ENCODE measurements at regions of chr16 and their contacts with region 1.

Region 1: GRCh38 chr16:81204798-81205680 is 33.5 kb upstream of the BCO1 start:
- DNase-seq: peak; percentile 75
- ATAC-seq: no peak
- H3K4me3 Mint-ChIP-seq: no peak overlapping the region
- H3K27ac Mint-ChIP-seq: no peak overlapping the region
- H3K4me1 Mint-ChIP-seq: no peaks in the 10 kb centered on the region
- H3K27me3 Mint-ChIP-seq: peaks cover 7% of the 10 kb centered on the region

Region 2: GRCh38 chr16:81189100-81189664 is 15.9 kb before region 1 on chr16:
- CTCF ChIA-PET with region 1: interaction called, 13 read pairs
- POLR2A ChIA-PET with region 1: no interaction called
- intact Hi-C with region 1: no loop called
- DNase-seq: no peak
- ATAC-seq: no peak
- H3K4me3 Mint-ChIP-seq: no peak overlapping the region
- H3K27ac Mint-ChIP-seq: no peak overlapping the region
- H3K4me1 Mint-ChIP-seq: peaks cover 3% of the 10 kb centered on the region
- H3K27me3 Mint-ChIP-seq: peaks cover 6% of the 10 kb centered on the region

Region 3: DNA sequence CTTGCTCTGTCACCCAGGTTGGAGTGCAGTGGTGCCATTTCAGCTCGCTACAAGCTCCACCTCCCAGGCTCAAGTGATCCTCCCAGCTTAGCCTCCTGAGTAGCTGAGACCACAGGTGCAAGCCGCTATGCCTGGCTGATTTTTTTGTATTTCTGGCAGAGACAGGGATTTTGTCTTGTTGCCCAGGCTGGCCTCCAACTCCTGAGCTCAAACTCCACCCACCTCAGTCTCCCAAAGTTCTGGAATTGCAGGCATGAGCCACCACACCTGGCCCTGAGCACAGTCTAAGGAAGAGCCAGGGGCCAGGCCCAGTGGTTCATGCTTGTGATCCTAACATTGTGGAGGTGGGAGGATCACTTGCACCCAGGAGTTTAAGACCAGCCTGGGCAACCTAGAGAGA is 11.7 kb after region 1 on chr16:
- CTCF ChIA-PET with region 1: interaction called, 18 read pairs
- POLR2A ChIA-PET with region 1: interaction called, 4 read pairs
- intact Hi-C with region 1: no loop called
- DNase-seq: no peak
- ATAC-seq: no peak
- H3K4me3 Mint-ChIP-seq: no peak overlapping the region
- H3K27ac Mint-ChIP-seq: no peak overlapping the region
- H3K4me1 Mint-ChIP-seq: no peaks in the 10 kb centered on the region
- H3K27me3 Mint-ChIP-seq: peaks cover 3% of the 10 kb centered on the region

Region 4: GRCh38 chr16:81349996-81350618 is 145.1 kb after region 1 on chr16:
- CTCF ChIA-PET with region 1: interaction called, 5 read pairs
- POLR2A ChIA-PET with region 1: no interaction called
- intact Hi-C with region 1: loop called in 1 of 2 experiments (anchors 5 kb)
- DNase-seq: no peak
- ATAC-seq: peak; percentile 25
- H3K4me3 Mint-ChIP-seq: no peak overlapping the region
- H3K27ac Mint-ChIP-seq: no peak overlapping the region
- H3K4me1 Mint-ChIP-seq: peaks cover 15% of the 10 kb centered on the region
- H3K27me3 Mint-ChIP-seq: no peaks in the 10 kb centered on the region

Region 5: GRCh38 chr16:81737885-81738786 is 533.1 kb after region 1 on chr16:
- CTCF ChIA-PET with region 1: interaction called, 7 read pairs
- POLR2A ChIA-PET with region 1: no interaction called
- intact Hi-C with region 1: loop called (anchors 1 kb)
- DNase-seq: peak; percentile 93
- ATAC-seq: peak; percentile 98
- H3K4me3 Mint-ChIP-seq: peak overlapping the region; percentile 55
- H3K27ac Mint-ChIP-seq: peak overlapping the region; percentile 51
- H3K4me1 Mint-ChIP-seq: no peaks in the 10 kb centered on the region
- H3K27me3 Mint-ChIP-seq: no peaks in the 10 kb centered on the region

Region 6: DNA sequence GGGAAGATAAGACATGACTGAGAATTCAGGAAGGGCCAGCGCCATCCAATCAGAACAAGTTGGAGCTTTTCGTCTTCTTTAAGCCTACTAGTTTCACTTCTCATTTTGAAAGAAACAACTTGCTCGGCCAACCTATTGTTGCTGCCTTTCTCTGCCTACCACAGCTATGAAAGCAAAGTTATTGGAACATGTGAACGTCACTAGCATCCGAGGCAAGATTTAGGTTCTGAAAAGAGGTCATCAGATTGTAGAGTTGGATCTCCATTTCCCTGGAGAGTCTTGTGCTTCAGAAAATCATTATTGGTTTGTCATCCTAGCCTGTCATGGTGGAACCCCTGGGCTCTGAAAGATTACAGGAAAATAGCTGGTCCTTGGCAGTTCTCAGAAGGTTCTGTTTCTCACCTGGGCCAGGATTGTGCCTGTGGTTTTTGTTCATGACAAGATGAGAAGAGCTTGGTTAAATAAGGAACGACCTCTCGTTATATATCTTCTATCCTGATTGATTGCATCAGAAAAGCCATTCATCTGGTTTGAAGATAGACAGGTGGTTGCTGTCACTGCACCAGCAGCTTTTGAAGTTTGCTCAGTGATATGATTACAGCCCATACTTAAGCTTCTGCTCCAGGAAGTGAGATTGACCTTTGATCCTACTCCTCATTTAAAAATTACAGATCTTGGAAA is 1447.0 kb after region 1 on chr16:
- CTCF ChIA-PET with region 1: no interaction called
- POLR2A ChIA-PET with region 1: no interaction called
- intact Hi-C with region 1: no loop called
- DNase-seq: peak; percentile 47
- ATAC-seq: peak; percentile 20
- H3K4me3 Mint-ChIP-seq: peak overlapping the region; percentile 34
- H3K27ac Mint-ChIP-seq: peak overlapping the region; percentile 88
- H3K4me1 Mint-ChIP-seq: peaks cover 74% of the 10 kb centered on the region
- H3K27me3 Mint-ChIP-seq: peaks cover 2% of the 10 kb centered on the region

Measured in activated CD4-positive, alpha-beta T cell treated with anti-CD3 and anti-CD28 coated beads for 36 hours (primary cell).